Aorta (tissue), 5 donors: ENCODE measurements at regions of chr4 and their contacts with region 1.

Region 1: DNA sequence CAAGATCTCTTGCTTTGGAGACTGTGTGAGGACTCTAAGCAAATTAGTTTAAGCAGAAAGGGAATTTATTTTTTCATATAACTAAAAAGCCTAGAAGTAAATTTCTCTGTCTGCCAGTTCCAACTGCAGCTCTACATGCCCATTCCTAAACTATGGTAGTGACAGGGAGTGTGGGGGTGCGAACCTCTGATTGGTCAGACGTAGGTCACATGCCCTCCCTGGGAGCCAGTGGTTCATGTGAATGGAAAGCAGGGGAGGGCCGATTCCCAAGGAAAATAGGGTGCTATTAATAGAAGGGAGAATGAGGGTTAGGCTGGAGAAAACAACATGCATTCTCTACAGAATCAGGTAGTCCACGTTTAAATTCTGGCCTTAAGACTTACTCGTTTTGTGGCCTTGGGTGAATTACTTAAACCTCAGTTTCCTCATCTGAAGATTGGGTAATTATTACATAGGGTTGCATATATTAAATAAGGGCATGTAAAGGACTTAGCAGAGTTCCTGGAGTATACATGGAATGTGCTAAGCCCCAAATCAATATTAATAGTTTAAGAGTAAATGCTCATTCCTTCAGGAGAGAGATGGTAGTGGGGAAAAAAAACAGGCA is 7.2 kb downstream of the RAB33B start:
- DNase-seq: no peak
- ATAC-seq: peak; percentile 63
- H3K4me3 ChIP-seq: no peak overlapping the region
- H3K27ac ChIP-seq: no peak overlapping the region
- H3K4me1 ChIP-seq: peaks cover 0 to 2% of the 10 kb centered on the region in 2 donors
- H3K27me3 ChIP-seq: no peaks in the 10 kb centered on the region

Region 2: GRCh38 chr4:139476363-139476762 is 15.2 kb after region 1 on chr4:
- intact Hi-C with region 1: loop called in 1 of 2 experiments (anchors 2 kb)
- DNase-seq: no peak
- ATAC-seq: no peak
- H3K4me3 ChIP-seq: no peak overlapping the region
- H3K27ac ChIP-seq: no peak overlapping the region
- H3K4me1 ChIP-seq: peaks cover 0 to 7% of the 10 kb centered on the region in 2 donors
- H3K27me3 ChIP-seq: no peaks in the 10 kb centered on the region